ENCODE measurements at regions of chr2 and their contacts with region 1.

Region 1: DNA sequence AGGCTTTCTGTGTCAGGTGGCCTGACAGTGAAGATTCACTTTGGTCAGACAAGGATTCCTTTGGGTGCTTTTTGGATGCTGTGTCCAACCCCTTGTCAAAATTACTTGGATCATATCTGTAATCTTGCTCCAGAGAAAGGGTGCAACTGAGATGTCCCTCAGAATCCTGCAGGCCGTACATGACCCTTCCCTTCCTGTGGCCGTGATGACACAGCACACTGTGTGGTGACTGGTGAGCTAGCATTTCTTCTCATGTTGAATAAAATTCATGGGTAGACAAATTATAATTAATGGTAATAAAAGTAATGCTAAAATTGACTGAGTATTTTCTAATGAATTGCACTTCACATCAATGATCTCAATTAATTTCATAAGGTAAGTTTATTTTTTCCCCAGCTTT is 356.2 kb downstream of the LPIN1 start:
- DNase-seq: no peak
- ATAC-seq: no peak
- H3K4me3 Mint-ChIP-seq: no peak overlapping the region
- H3K27ac Mint-ChIP-seq: no peak overlapping the region
- H3K4me1 Mint-ChIP-seq: peaks cover 25% of the 10 kb centered on the region
- H3K27me3 Mint-ChIP-seq: no peaks in the 10 kb centered on the region
- CTCF ChIP-seq: no peak

Region 2: DNA sequence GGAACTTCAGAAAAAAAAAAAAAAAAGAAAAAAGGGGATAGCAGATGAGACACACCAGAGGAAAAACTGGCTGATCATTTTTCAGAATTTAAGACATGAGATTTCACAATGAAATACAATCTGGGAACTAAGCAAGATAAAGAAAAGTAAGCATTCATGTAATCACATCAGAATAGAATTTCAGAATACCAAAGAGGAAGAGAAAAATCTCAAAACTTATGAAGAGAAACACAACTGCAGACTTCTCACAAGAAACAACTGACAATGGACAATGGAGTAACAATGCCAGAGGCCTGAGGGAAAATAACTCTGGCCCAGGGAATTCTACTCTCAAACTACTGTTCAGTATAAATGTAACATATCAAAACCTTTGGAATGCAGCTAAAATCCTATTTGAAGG is 1993.4 kb before region 1 on chr2:
- CTCF ChIA-PET with region 1: no interaction called
- POLR2A ChIA-PET with region 1: no interaction called
- intact Hi-C with region 1: no loop called
- DNase-seq: no peak
- ATAC-seq: no peak
- H3K4me3 Mint-ChIP-seq: no peak overlapping the region
- H3K27ac Mint-ChIP-seq: no peak overlapping the region
- H3K4me1 Mint-ChIP-seq: no peaks in the 10 kb centered on the region
- H3K27me3 Mint-ChIP-seq: no peaks in the 10 kb centered on the region
- CTCF ChIP-seq: no peak

Region 3: GRCh38 chr2:12116228-12116750 is 13.6 kb after region 1 on chr2:
- CTCF ChIA-PET with region 1: no interaction called
- POLR2A ChIA-PET with region 1: interaction called, 4 read pairs
- intact Hi-C with region 1: loop called (anchors 2 kb)
- DNase-seq: no peak
- ATAC-seq: peak; percentile 73
- H3K4me3 Mint-ChIP-seq: peak overlapping the region; percentile 51
- H3K27ac Mint-ChIP-seq: peak overlapping the region; percentile 78
- H3K4me1 Mint-ChIP-seq: peaks cover 63% of the 10 kb centered on the region
- H3K27me3 Mint-ChIP-seq: no peaks in the 10 kb centered on the region
- CTCF ChIP-seq: no peak

Region 4: DNA sequence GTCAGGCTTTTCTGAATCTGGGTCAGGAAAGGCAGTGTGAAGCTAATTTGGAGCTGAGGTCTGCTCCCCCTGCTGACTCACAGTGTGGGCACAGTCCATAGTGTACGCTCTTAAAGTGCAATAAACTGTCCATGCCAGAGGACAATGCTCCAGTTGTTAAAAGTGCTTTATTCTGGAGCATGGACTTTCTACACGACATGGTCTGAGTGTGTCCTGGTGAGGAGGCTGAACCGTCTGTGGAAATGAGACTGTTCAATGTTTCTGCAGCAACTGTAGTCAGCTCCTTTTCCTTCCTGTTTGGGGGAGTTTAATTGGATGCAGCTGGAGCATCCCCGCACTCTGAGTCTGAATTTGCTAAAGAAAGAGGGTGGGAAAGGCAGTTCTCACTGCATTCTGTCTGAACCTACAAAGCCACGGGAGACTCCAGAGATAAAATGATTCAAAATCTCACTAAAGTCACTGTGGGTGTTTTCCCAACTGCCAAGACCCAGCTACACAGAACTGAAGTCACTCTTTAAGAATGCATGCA is 503.9 kb after region 1 on chr2:
- CTCF ChIA-PET with region 1: no interaction called
- POLR2A ChIA-PET with region 1: no interaction called
- intact Hi-C with region 1: no loop called
- DNase-seq: no peak
- ATAC-seq: no peak
- H3K4me3 Mint-ChIP-seq: no peak overlapping the region
- H3K27ac Mint-ChIP-seq: no peak overlapping the region
- H3K4me1 Mint-ChIP-seq: peaks cover 7% of the 10 kb centered on the region
- H3K27me3 Mint-ChIP-seq: peaks cover 10% of the 10 kb centered on the region
- CTCF ChIP-seq: no peak

Measured in activated B cell treated with CpG ODN at 0.5 μM for 24 hours (primary cell).